ENCODE measurements at regions of chr6 and their contacts with region 1.

Region 1: GRCh38 chr6:25490018-25490801 is 161.8 kb upstream of the SCGN start:
- DNase-seq: peak; percentile 73
- H3K4me3 ChIP-seq: no peak overlapping the region
- H3K27ac ChIP-seq: no peak overlapping the region
- H3K4me1 ChIP-seq: no peaks in the 10 kb centered on the region
- H3K27me3 ChIP-seq: no peaks in the 10 kb centered on the region
- CTCF ChIP-seq: peak; percentile 73 to 83
- POLR2A ChIP-seq: no peak

Region 2: GRCh38 chr6:24743265-24743943 is 746.8 kb before region 1 on chr6:
- CTCF ChIA-PET with region 1: no interaction called
- POLR2A ChIA-PET with region 1: no interaction called
- dilution Hi-C with region 1: no loop called
- intact Hi-C with region 1: no loop called
- DNase-seq: peak; percentile 95
- H3K4me3 ChIP-seq: peak overlapping the region in 1 of 3 experiments; percentile 9
- H3K27ac ChIP-seq: peak overlapping the region; percentile 90
- H3K4me1 ChIP-seq: peaks cover 16% of the 10 kb centered on the region
- H3K27me3 ChIP-seq: no peaks in the 10 kb centered on the region
- CTCF ChIP-seq: no peak
- POLR2A ChIP-seq: no peak

Region 3: GRCh38 chr6:24855395-24856245 is 634.6 kb before region 1 on chr6:
- CTCF ChIA-PET with region 1: interaction called, 8 read pairs
- POLR2A ChIA-PET with region 1: no interaction called
- dilution Hi-C with region 1: no loop called
- intact Hi-C with region 1: loop called (anchors 5 kb)
- DNase-seq: peak; percentile 70
- H3K4me3 ChIP-seq: no peak overlapping the region
- H3K27ac ChIP-seq: no peak overlapping the region
- H3K4me1 ChIP-seq: no peaks in the 10 kb centered on the region
- H3K27me3 ChIP-seq: no peaks in the 10 kb centered on the region
- CTCF ChIP-seq: peak; percentile 74 to 76
- POLR2A ChIP-seq: no peak

Region 4: GRCh38 chr6:25147223-25147622 is 343.0 kb before region 1 on chr6:
- CTCF ChIA-PET with region 1: no interaction called
- POLR2A ChIA-PET with region 1: no interaction called
- dilution Hi-C with region 1: no loop called
- intact Hi-C with region 1: no loop called
- DNase-seq: no peak
- H3K4me3 ChIP-seq: no peak overlapping the region
- H3K27ac ChIP-seq: no peak overlapping the region
- H3K4me1 ChIP-seq: no peaks in the 10 kb centered on the region
- H3K27me3 ChIP-seq: no peaks in the 10 kb centered on the region
- CTCF ChIP-seq: no peak
- POLR2A ChIP-seq: no peak

Region 5: GRCh38 chr6:25257686-25258348 is 232.4 kb before region 1 on chr6:
- CTCF ChIA-PET with region 1: interaction called, 10 read pairs
- POLR2A ChIA-PET with region 1: no interaction called
- dilution Hi-C with region 1: no loop called
- intact Hi-C with region 1: no loop called
- DNase-seq: no peak
- H3K4me3 ChIP-seq: no peak overlapping the region
- H3K27ac ChIP-seq: no peak overlapping the region
- H3K4me1 ChIP-seq: no peaks in the 10 kb centered on the region
- H3K27me3 ChIP-seq: no peaks in the 10 kb centered on the region
- CTCF ChIP-seq: no peak
- POLR2A ChIP-seq: no peak

Region 6: GRCh38 chr6:25270559-25270958 is 219.7 kb before region 1 on chr6:
- CTCF ChIA-PET with region 1: interaction called, 164 read pairs
- POLR2A ChIA-PET with region 1: no interaction called
- dilution Hi-C with region 1: no loop called
- intact Hi-C with region 1: loop called (anchors 1 kb)
- DNase-seq: no peak
- H3K4me3 ChIP-seq: no peak overlapping the region
- H3K27ac ChIP-seq: no peak overlapping the region
- H3K4me1 ChIP-seq: no peaks in the 10 kb centered on the region
- H3K27me3 ChIP-seq: peaks cover 0 to 3% of the 10 kb centered on the region in 2 experiments
- CTCF ChIP-seq: no peak
- POLR2A ChIP-seq: no peak

Region 7: DNA sequence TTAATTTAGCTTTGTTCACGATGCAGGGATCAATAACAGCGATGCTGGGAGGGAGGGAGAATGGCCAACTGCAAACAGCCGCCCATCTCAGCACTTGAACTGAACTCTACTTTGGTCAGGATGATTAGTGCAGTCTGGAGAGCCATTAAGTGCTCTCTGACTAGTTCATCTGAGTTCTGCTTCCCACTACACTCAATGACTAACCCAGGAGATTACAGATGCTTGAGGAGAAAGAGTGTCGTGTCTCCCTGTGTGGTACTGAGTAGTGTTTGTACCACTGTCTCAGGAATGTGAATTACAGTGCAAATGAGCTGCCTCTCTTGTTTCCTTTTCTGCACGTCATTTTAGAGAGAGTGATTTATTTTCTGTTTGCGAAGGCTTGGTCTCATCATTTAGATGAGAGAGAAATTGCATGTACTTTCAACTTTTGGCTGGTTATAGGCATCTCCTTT is 187.5 kb before region 1 on chr6:
- CTCF ChIA-PET with region 1: no interaction called
- POLR2A ChIA-PET with region 1: no interaction called
- dilution Hi-C with region 1: no loop called
- intact Hi-C with region 1: no loop called
- DNase-seq: no peak
- H3K4me3 ChIP-seq: no peak overlapping the region
- H3K27ac ChIP-seq: no peak overlapping the region
- H3K4me1 ChIP-seq: no peaks in the 10 kb centered on the region
- H3K27me3 ChIP-seq: peaks cover 0 to 3% of the 10 kb centered on the region in 2 experiments
- CTCF ChIP-seq: no peak
- POLR2A ChIP-seq: no peak

Region 8: DNA sequence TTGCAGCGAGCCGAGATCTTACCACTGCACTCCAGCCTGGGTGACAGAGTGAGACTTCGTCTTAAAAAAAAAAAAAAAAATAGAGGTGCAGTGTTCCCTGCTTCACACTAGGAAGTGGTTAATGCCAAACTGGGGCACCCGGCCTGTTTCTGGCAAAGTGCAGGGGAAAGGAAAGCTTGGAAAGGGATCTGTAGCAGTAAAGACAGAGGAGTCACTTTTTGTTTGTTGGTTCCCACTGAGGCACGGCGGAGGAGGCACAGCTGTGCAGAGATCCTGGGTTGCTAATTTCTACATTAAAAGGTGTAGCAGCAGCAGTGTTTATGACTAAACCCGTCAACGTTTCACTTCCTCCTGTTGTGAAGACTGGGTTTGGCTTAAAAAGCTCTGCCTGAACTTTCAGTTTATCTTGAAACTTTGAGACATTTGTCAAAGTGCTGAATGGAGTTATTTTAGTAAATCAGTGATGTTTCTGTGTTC is 85.5 kb before region 1 on chr6:
- CTCF ChIA-PET with region 1: interaction called, 10 read pairs
- POLR2A ChIA-PET with region 1: no interaction called
- dilution Hi-C with region 1: no loop called
- intact Hi-C with region 1: no loop called
- DNase-seq: peak; percentile 6
- H3K4me3 ChIP-seq: no peak overlapping the region
- H3K27ac ChIP-seq: no peak overlapping the region
- H3K4me1 ChIP-seq: no peaks in the 10 kb centered on the region
- H3K27me3 ChIP-seq: no peaks in the 10 kb centered on the region
- CTCF ChIP-seq: no peak
- POLR2A ChIP-seq: no peak

Region 9: GRCh38 chr6:25511376-25511775 is 21.2 kb after region 1 on chr6:
- CTCF ChIA-PET with region 1: interaction called, 30 read pairs
- POLR2A ChIA-PET with region 1: no interaction called
- dilution Hi-C with region 1: no loop called
- intact Hi-C with region 1: no loop called
- DNase-seq: no peak
- H3K4me3 ChIP-seq: no peak overlapping the region
- H3K27ac ChIP-seq: no peak overlapping the region
- H3K4me1 ChIP-seq: no peaks in the 10 kb centered on the region
- H3K27me3 ChIP-seq: no peaks in the 10 kb centered on the region
- CTCF ChIP-seq: no peak
- POLR2A ChIP-seq: no peak

Region 10: GRCh38 chr6:25601800-25602673 is 111.8 kb after region 1 on chr6:
- CTCF ChIA-PET with region 1: interaction called, 6 read pairs
- POLR2A ChIA-PET with region 1: no interaction called
- dilution Hi-C with region 1: no loop called
- intact Hi-C with region 1: loop called (anchors 2 kb)
- DNase-seq: peak; percentile 62
- H3K4me3 ChIP-seq: no peak overlapping the region
- H3K27ac ChIP-seq: no peak overlapping the region
- H3K4me1 ChIP-seq: no peaks in the 10 kb centered on the region
- H3K27me3 ChIP-seq: peaks cover 0 to 2% of the 10 kb centered on the region in 2 experiments
- CTCF ChIP-seq: peak; percentile 10 to 19
- POLR2A ChIP-seq: no peak